ENCODE measurements at regions of chr22 and their contacts with region 1.

Region 1: DNA sequence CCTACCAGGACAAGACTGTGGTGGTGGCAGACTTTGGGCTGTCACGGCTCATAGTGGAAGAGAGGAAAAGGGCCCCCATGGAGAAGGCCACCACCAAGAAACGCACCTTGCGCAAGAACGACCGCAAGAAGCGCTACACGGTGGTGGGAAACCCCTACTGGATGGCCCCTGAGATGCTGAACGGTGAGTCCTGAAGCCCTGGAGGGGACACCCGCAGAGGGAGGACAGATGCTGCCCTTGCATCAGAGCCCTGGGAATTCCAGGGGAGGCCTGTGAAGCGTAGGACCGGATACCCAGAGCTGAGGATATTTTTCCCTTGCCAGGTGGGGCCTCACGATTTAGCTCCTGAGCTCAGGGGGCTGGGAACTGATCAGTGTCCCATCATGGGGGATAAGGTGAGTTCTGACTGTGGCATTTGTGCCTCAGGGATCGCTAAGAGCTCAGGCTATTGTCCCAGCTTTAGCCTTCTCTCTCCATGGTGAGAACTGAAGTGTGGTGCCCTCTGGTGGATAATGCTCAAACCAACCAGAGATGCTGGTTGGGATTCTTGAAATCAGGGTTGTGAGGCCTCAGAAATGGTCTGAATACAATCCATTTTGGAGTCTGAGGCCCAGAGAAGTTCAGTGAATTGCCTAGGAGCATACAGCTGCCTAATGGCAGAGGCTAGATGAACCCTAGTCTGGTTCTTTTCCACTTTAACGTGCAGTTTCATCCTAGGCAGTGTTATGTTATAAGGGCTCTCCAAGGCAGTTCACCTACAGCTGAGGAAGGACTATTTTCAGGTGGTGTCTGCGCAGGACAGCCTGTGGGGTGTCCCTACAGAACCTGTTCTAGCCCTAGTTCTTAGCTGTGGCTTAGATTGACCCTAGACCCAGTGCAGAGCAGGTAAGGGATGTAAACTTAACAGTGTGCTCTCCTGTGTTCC is 19.5 kb downstream of the PIK3IP1 start:
- DNase-seq: peak; percentile 67
- ATAC-seq: peak; percentile 77
- H3K4me3 Mint-ChIP-seq: no peak overlapping the region
- H3K27ac Mint-ChIP-seq: peak overlapping the region; percentile 57
- H3K4me1 Mint-ChIP-seq: peaks cover 2% of the 10 kb centered on the region
- H3K27me3 Mint-ChIP-seq: no peaks in the 10 kb centered on the region

Region 2: GRCh38 chr22:31211862-31212730 is 60.7 kb before region 1 on chr22 and contains the start of gene LIMK2:
- CTCF ChIA-PET with region 1: interaction called, 83 read pairs
- POLR2A ChIA-PET with region 1: interaction called, 6 read pairs
- DNase-seq: peak; percentile 98
- ATAC-seq: peak; percentile 99
- H3K4me3 Mint-ChIP-seq: peak within 1 kb of the TSS; percentile 87
- H3K27ac Mint-ChIP-seq: peak within 1 kb of the TSS; percentile 90
- H3K4me1 Mint-ChIP-seq: peaks cover 45% of the 10 kb centered on the region
- H3K27me3 Mint-ChIP-seq: no peaks in the 10 kb centered on the region
- total RNA-seq, gene LIMK2: 42.7 to 44.3 TPM

Region 3: GRCh38 chr22:31230871-31231621 is 41.7 kb before region 1 on chr22:
- CTCF ChIA-PET with region 1: interaction called, 25 read pairs
- POLR2A ChIA-PET with region 1: no interaction called
- DNase-seq: peak; percentile 63
- ATAC-seq: peak; percentile 68
- H3K4me3 Mint-ChIP-seq: no peak overlapping the region
- H3K27ac Mint-ChIP-seq: no peak overlapping the region
- H3K4me1 Mint-ChIP-seq: peaks cover 56% of the 10 kb centered on the region
- H3K27me3 Mint-ChIP-seq: no peaks in the 10 kb centered on the region

Region 4: DNA sequence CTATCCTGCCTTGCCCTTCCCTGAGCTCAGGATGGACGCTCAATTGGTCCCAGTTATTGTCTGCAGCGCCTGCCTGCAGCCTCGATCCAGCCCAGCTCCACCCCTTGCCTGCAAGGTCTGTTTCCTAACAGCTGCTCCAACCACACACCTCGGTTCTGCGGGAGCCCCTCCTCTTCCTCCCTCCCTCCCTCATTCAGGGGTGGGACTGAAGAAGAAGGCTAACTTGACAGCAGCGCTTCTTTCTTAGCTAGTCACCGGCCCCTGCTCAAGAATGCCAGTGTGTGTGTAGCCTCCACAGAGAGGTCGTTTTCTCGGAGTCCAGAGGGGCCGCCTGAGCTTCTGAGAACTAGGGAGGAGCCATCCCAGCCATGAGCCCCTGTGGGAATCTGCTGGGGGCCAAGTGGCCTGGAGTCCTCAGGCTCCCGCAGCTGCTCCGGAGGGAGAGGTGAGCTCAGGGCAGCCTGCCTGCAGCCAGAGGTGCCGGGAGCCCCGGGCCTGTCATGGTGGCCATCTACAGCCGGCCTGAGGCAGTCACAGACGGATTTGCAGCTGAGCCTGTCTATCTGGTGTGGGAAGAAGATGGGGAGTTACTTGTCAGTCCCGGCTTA is 24.5 kb before region 1 on chr22:
- CTCF ChIA-PET with region 1: interaction called, 58 read pairs
- POLR2A ChIA-PET with region 1: no interaction called
- DNase-seq: peak; percentile 89
- ATAC-seq: peak; percentile 100
- H3K4me3 Mint-ChIP-seq: peak overlapping the region; percentile 48
- H3K27ac Mint-ChIP-seq: peak overlapping the region; percentile 77
- H3K4me1 Mint-ChIP-seq: peaks cover 34% of the 10 kb centered on the region
- H3K27me3 Mint-ChIP-seq: no peaks in the 10 kb centered on the region

Region 5: GRCh38 chr22:31290494-31291471 is 18.0 kb after region 1 on chr22:
- CTCF ChIA-PET with region 1: interaction called, 43 read pairs
- POLR2A ChIA-PET with region 1: interaction called, 99 read pairs
- DNase-seq: peak; percentile 95
- ATAC-seq: peak; percentile 88
- H3K4me3 Mint-ChIP-seq: peak overlapping the region; percentile 97
- H3K27ac Mint-ChIP-seq: peak overlapping the region; percentile 99
- H3K4me1 Mint-ChIP-seq: peaks cover 77% of the 10 kb centered on the region
- H3K27me3 Mint-ChIP-seq: no peaks in the 10 kb centered on the region

Region 6: GRCh38 chr22:31313366-31314147 is 40.8 kb after region 1 on chr22:
- CTCF ChIA-PET with region 1: interaction called, 20 read pairs
- POLR2A ChIA-PET with region 1: no interaction called
- DNase-seq: peak; percentile 75
- ATAC-seq: peak; percentile 63
- H3K4me3 Mint-ChIP-seq: no peak overlapping the region
- H3K27ac Mint-ChIP-seq: no peak overlapping the region
- H3K4me1 Mint-ChIP-seq: peaks cover 2% of the 10 kb centered on the region
- H3K27me3 Mint-ChIP-seq: no peaks in the 10 kb centered on the region

Measured in activated CD8-positive, alpha-beta T cell treated with anti-CD3 and anti-CD28 coated beads, Interleukin-2, amount 10 ng/mL, durations not matched to agents 7 days and 5 days (primary cell).